Sciatic nerve (tissue), 2 donors: ENCODE measurements at regions of chr9 and their contacts with region 1.

Region 1: DNA sequence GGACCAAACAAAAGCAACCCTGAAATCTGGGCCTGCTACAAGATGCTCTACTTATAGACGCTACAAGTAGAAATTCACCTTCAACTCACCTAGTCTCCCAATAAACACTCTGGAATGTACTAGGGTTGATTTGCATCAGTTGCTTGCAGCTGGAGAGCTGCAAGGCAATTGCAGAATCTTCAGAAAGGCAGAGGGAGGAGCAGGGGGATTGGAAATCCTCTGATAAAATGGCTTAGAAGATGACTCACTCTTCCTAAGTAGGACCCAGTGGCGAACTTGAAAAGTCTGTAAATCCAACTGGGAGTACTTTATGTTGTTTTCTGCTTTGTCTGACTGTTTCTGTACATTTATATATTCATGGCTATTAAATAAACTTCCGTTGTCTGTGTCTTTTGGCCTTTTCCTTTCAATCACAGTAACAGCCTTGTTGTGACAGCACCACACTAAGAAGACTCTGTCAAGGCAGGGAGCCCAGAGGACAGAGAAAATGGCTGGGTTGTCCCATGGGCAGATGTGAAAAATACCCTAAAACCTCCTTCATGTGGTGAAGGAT is 14.7 kb upstream of the MLLT3 start:
- DNase-seq: no peak
- ATAC-seq: no peak

Region 2: GRCh38 chr9:20701060-20701459 is 64.1 kb after region 1 on chr9:
- intact Hi-C with region 1: loop called (anchors 5 kb)
- DNase-seq: no peak
- ATAC-seq: no peak